ENCODE measurements at regions of chr16 and their contacts with region 1.

Region 1: GRCh38 chr16:14529010-14529669 is 100.9 kb downstream of the PARN start:
- DNase-seq: peak in 2 of 3 donors; percentile 75 to 76
- ATAC-seq: peak; percentile 93
- H3K4me3 ChIP-seq: no peak overlapping the region
- H3K4me1 ChIP-seq: peaks cover 8% of the 10 kb centered on the region
- CTCF ChIP-seq: no peak

Region 2: DNA sequence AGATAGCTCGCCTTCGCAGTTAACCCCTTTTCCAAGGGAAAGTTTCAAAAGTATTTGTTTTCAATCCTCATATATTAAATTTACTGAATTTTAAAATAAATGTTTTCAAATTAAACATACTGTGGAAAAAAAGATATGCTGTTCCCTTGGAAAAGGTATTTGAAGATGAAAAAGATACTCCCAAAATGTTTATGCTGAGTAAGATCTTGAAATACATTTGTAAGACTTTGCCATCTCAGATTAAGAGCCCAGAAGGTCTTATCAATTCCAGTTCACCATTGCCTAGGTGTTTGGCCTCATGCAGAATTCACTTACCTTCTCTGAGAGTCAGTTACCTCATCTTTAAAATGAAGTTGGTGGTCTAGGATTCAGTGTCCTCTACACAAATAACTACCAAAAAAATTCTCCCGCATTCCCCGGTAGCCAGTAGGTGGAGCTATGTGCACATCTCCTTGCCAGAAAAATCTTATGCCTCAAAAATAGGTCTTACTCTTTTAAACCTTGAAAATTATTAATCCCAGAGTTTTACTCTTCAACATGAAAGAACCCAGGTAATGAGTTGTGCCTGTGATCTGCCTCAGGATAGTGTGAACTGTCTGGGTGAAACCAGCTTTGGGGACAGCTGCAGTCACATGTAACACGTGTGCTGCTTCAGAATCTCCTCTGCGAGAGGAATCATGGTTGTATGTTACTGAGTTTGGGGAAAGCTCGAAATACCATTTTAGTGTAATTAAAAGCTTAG is 279.7 kb before region 1 on chr16:
- intact Hi-C with region 1: loop called in 1 of 2 experiments (anchors 5 kb)
- DNase-seq: peak in 1 of 3 donors; percentile 66
- ATAC-seq: peak; percentile 38
- H3K4me3 ChIP-seq: no peak overlapping the region
- H3K4me1 ChIP-seq: no peaks in the 10 kb centered on the region
- CTCF ChIP-seq: peak; percentile 72

Region 3: DNA sequence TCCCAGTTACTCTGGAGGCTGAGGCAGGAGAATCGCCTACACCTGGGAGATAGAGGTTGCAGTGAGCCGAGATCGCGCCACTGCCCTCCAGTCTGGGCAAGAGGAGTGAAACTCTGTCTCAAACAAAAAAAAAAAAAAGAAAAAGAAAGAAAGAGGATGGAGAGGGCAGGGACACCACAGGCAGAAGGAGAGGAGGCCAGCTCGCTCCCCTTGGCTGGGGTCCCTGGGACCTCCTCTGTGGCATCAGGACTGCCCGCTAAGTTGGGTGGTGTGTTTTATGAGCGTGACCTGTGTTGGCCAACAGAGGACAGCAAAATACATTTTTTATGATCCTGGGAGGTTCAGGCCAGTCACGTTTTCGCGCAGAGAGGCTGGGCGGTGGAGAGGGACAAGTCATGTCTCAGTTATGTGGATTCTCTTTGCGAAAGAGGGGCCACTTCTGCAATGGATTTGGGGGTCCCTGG is 228.4 kb before region 1 on chr16:
- intact Hi-C with region 1: loop called in 1 of 2 experiments (anchors 5 kb)
- DNase-seq: peak; percentile 60 to 65 (median 63)
- ATAC-seq: peak; percentile 72
- H3K4me3 ChIP-seq: no peak overlapping the region
- H3K4me1 ChIP-seq: peaks cover 4% of the 10 kb centered on the region
- CTCF ChIP-seq: no peak

Region 4: GRCh38 chr16:14405611-14406537 is 123.3 kb before region 1 on chr16:
- intact Hi-C with region 1: no loop called
- DNase-seq: peak; percentile 41 to 74 (median 64)
- ATAC-seq: peak; percentile 79
- H3K4me3 ChIP-seq: no peak overlapping the region
- H3K4me1 ChIP-seq: peaks cover 4% of the 10 kb centered on the region
- CTCF ChIP-seq: no peak

Region 5: DNA sequence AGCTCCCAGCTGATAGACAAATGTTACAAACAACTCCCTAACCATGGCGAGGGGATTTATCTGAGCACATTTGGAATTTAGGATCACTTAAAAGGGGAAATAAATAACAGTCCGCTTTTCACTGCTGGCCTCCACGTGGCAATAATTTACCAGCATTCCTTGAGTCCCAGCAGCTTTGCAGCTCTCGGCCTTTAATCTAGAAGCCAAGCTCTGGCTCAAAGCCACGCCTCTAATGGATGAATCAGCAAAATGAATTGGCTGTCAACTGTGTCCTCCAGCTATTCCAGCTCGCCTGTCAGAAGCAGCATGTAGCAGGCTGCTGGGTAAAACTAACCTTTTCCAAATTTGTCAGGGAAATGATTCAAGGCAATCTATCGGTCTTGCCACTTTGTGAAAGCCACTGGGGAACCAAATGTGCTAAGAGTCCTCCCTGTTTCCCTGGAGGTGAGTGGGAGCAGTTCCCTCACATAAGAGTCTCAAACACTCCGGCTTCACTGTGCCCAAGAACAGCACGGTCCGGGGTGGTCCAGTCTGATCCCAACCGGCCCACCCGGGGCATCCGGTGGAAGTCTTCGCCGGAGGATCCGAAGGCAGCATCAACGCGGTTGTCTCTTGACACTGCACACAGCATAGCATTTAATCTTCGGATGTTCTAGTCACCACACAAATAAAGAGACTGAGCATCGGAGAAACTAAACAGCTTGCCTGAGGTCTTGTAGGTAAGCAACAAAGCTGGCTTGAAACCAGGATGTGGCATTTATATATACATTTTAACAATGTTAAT is 42.4 kb before region 1 on chr16:
- intact Hi-C with region 1: no loop called
- DNase-seq: peak in 2 of 3 donors; percentile 63 to 89
- ATAC-seq: peak; percentile 92
- H3K4me3 ChIP-seq: no peak overlapping the region
- H3K4me1 ChIP-seq: peaks cover 6% of the 10 kb centered on the region
- CTCF ChIP-seq: no peak

Region 6: DNA sequence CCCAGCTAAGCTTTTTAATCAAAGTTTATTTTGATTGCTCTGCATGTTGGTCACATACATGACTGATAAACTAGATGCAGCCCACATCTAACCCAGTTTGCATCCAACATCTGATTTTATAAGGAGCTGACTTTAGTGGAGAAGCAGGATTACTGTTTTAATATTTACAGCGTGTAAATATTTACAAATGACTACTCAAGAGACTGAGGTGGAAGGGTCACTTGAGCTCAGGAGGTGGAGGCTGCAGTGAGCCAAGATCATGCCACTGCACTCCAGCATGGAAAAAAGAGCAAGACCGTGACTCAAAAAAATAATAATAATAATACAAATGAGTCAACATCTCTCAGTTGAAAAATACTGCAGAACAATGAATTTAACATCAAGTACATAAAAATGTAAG is 50.1 kb after region 1 on chr16:
- intact Hi-C with region 1: no loop called
- DNase-seq: no peak
- ATAC-seq: no peak
- H3K4me3 ChIP-seq: no peak overlapping the region
- H3K4me1 ChIP-seq: peaks cover 6% of the 10 kb centered on the region
- CTCF ChIP-seq: no peak